ENCODE measurements at regions of chr5 and their contacts with region 1.

Region 1: GRCh38 chr5:57779383-57780223 is 297.0 kb upstream of the ACTBL2 start:
- DNase-seq: peak; percentile 30 to 41
- H3K4me3 ChIP-seq: no peak overlapping the region
- H3K27ac ChIP-seq: no peak overlapping the region
- H3K4me1 ChIP-seq: peaks cover 8 to 9% of the 10 kb centered on the region in 2 donors
- H3K27me3 ChIP-seq: no peaks in the 10 kb centered on the region
- CTCF ChIP-seq: peak in 4 of 6 experiments; percentile 59 to 82 (median 74)
- POLR2A ChIP-seq: no peak

Region 2: DNA sequence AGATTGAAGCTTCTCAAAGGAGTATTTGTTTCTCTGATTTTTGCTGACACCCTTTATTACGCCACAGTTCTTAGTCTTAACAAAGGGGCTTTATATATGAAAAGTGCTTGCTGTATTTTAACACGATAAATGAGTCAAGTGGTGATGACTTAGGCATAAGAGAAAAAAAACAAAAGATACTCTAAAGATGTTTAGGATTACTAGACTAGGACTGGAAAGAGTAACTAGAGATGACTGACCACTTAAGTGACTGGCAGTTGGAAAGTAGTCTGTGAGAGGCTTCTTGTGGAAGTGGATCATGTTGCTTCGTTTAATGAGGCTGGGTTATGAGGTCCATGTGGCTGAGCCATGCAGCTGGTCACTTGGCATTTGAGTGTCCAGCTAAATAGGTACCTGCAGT is 227.6 kb before region 1 on chr5:
- intact Hi-C with region 1: no loop called
- DNase-seq: no peak
- H3K4me3 ChIP-seq: no peak overlapping the region
- H3K27ac ChIP-seq: no peak overlapping the region
- H3K4me1 ChIP-seq: no peaks in the 10 kb centered on the region
- H3K27me3 ChIP-seq: no peaks in the 10 kb centered on the region
- CTCF ChIP-seq: no peak
- POLR2A ChIP-seq: no peak

Region 3: GRCh38 chr5:57692582-57693487 is 86.8 kb before region 1 on chr5:
- intact Hi-C with region 1: no loop called
- DNase-seq: peak; percentile 20 to 41
- H3K4me3 ChIP-seq: no peak overlapping the region
- H3K27ac ChIP-seq: peak overlapping the region in 2 of 3 donors; percentile 29 to 47
- H3K4me1 ChIP-seq: peaks cover 3 to 9% of the 10 kb centered on the region in 2 donors
- H3K27me3 ChIP-seq: no peaks in the 10 kb centered on the region
- CTCF ChIP-seq: no peak
- POLR2A ChIP-seq: no peak

Region 4: GRCh38 chr5:57887851-57888621 is 108.4 kb after region 1 on chr5:
- intact Hi-C with region 1: loop called (anchors 10 kb)
- DNase-seq: peak; percentile 53 to 58
- H3K4me3 ChIP-seq: no peak overlapping the region
- H3K27ac ChIP-seq: no peak overlapping the region
- H3K4me1 ChIP-seq: no peaks in the 10 kb centered on the region
- H3K27me3 ChIP-seq: no peaks in the 10 kb centered on the region
- CTCF ChIP-seq: peak in 5 of 6 experiments; percentile 44 to 80 (median 69)
- POLR2A ChIP-seq: no peak

Measured in thyroid gland (tissue), 4 donors.